Left ventricle myocardium inferior (tissue), 1 donor: ENCODE measurements at regions of chr16 and their contacts with region 1.

Region 1: DNA sequence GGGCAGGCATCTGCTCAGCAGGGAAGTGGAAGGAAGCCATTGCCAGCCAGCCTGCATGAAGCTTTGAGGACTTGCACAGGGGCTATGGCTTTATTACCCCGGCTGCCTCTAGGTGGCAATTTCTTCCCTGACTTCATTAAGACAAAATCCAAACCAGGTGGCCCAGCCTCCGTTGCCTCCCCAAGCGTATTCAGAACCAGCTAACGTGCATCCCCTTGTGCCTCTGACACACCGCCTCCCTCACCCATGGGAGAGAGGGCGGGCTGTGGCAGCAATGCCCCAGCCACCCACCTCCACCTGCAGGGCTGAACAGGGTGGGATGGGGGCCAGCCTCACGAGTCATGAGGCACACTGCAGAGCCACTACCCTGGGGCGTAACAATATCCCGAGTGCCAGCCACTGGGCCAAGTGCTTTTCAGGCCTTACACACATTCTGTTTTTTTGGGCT is 6.8 kb downstream of the KIFC3 start:
- DNase-seq: peak; percentile 41
- H3K4me3 ChIP-seq: no peak overlapping the region
- H3K27ac ChIP-seq: peak overlapping the region; percentile 34
- H3K4me1 ChIP-seq: peaks cover 78% of the 10 kb centered on the region
- H3K27me3 ChIP-seq: no peaks in the 10 kb centered on the region
- CTCF ChIP-seq: peak; percentile 56

Region 2: GRCh38 chr16:57260294-57260929 is 535.0 kb before region 1 on chr16:
- intact Hi-C with region 1: no loop called
- DNase-seq: no peak
- H3K4me3 ChIP-seq: no peak overlapping the region
- H3K27ac ChIP-seq: peak overlapping the region; percentile 73
- H3K4me1 ChIP-seq: peaks cover 17% of the 10 kb centered on the region
- H3K27me3 ChIP-seq: no peaks in the 10 kb centered on the region
- CTCF ChIP-seq: no peak

Region 3: DNA sequence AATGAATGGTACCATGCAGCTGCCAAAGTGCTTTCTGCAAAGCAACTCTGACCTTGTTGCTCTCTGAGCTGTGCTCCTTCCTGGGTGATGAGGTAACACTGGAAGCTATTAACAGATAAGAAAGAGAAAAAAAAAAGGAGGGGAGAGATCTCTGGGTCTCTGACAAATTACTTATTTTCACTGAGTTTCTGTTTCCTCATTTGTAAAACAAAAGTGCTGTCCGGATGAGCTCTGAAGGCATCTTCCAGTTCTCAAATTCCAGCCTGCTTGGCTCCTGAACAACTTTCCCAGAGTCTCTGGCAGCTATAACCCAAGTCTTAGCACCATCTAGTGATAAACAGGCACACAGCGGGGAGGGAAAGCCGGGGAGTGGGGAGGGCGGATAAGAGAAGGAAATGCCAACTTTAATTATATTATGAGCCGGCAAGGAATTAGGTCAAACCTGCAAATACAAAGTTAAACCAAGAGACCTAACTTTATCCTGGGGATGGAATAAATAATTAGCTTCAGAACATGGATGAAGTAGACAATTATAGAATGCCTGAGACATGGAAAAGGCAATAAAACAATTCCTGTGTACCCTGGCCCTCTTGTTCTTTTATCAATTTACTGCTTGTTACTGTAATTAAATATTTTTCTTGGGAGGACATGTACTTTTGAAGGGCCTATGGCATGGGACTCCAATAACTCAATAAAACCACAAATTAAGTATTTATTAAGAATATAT is 68.1 kb after region 1 on chr16:
- intact Hi-C with region 1: loop called (anchors 10 kb)
- DNase-seq: peak; percentile 45
- H3K4me3 ChIP-seq: no peak overlapping the region
- H3K27ac ChIP-seq: no peak overlapping the region
- H3K4me1 ChIP-seq: peaks cover 21% of the 10 kb centered on the region
- H3K27me3 ChIP-seq: no peaks in the 10 kb centered on the region
- CTCF ChIP-seq: peak; percentile 78